B cell (primary cell): ENCODE measurements at regions of chr2 and their contacts with region 1.

Region 1: GRCh38 chr2:230268606-230269243 is 43.2 kb downstream of the SP140 start:
- DNase-seq: no peak
- ATAC-seq: no peak
- H3K4me3 ChIP-seq: no peak overlapping the region
- H3K4me3 Mint-ChIP-seq: peak overlapping the region; percentile 54
- H3K27ac ChIP-seq: peak overlapping the region; percentile 1 to 31
- H3K27ac Mint-ChIP-seq: peak overlapping the region; percentile 84
- H3K4me1 ChIP-seq: peaks cover 32 to 38% of the 10 kb centered on the region in 2 donors
- H3K4me1 Mint-ChIP-seq: peaks cover 64% of the 10 kb centered on the region
- H3K27me3 ChIP-seq: no peaks in the 10 kb centered on the region
- H3K27me3 Mint-ChIP-seq: no peaks in the 10 kb centered on the region
- CTCF ChIP-seq: no peak

Region 2: DNA sequence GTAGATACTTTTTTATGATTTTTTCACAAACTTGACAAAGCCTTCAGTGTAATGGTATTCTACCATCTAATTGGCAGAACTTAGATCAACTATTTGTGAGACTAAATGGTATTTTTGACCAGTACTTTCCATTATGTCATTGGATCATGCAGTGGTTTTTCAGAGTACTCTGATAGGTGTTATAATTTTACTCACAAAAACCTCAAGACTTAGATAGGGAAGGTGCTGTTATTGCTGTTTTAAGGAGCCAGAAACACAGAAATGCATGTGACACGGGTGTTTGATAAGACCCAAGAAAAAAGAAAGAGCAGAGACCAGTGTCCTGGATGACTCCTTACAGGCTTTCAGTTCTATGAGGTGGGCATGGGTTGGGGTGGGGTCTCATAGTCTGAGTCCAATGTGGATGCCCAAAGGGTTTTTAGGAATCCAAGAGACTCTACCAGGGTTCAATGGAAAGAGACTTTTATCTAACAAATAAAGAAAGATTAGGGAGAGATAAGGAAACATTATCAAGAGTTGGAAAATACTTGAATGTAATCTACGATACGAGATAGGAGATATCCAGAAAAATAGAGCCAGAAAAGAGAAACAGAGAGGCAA is 11.9 kb before region 1 on chr2:
- CTCF ChIA-PET with region 1: no interaction called
- POLR2A ChIA-PET with region 1: interaction called, 6 read pairs
- intact Hi-C with region 1: loop called (anchors 1 kb)
- DNase-seq: no peak
- ATAC-seq: no peak
- H3K4me3 ChIP-seq: no peak overlapping the region
- H3K4me3 Mint-ChIP-seq: peak overlapping the region; percentile 68
- H3K27ac ChIP-seq: peak overlapping the region; percentile 43 to 78
- H3K27ac Mint-ChIP-seq: peak overlapping the region; percentile 83
- H3K4me1 ChIP-seq: peaks cover 20 to 26% of the 10 kb centered on the region in 2 donors
- H3K4me1 Mint-ChIP-seq: peaks cover 45% of the 10 kb centered on the region
- H3K27me3 ChIP-seq: no peaks in the 10 kb centered on the region
- H3K27me3 Mint-ChIP-seq: no peaks in the 10 kb centered on the region
- CTCF ChIP-seq: no peak

Region 3: DNA sequence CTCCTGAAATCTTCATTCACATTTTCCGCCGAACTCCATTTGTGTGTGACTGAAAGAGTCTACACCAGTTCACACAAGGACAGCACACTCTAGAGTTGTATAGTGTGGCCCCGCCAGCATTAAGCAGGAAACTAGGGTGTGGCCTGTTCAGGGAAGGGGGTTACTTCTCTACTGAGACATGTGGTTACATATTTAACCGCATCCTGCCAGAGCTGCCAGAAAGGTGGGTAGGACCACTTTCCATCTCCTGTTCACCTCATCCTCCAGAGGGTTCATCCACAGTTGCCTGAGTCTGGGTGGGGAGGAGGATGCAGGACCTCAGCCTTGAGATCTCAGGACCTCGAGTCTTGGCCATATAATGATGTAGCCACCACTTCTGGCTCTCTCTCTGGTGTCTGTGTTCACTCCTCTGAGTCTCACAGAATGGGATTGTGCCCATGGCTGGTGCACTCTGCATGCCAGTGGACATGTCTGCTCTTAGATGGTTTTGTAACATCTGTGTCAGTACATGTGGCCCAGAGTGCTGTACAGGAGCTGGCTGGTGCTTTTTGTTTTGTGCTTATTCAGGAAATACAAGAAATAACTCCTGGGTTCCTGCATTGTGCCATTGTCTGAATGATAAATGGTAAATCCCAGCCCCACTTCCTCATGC is 50.6 kb after region 1 on chr2:
- CTCF ChIA-PET with region 1: no interaction called
- POLR2A ChIA-PET with region 1: no interaction called
- intact Hi-C with region 1: loop called (anchors 5 kb)
- DNase-seq: peak; percentile 78
- ATAC-seq: peak; percentile 84
- H3K4me3 ChIP-seq: peak overlapping the region in 4 of 5 experiments; percentile 6 to 47 (median 21)
- H3K4me3 Mint-ChIP-seq: peak overlapping the region; percentile 69
- H3K27ac ChIP-seq: peak overlapping the region; percentile 79 to 86
- H3K27ac Mint-ChIP-seq: peak overlapping the region; percentile 92
- H3K4me1 ChIP-seq: peaks cover 41 to 63% of the 10 kb centered on the region in 2 donors
- H3K4me1 Mint-ChIP-seq: peaks cover 76% of the 10 kb centered on the region
- H3K27me3 ChIP-seq: no peaks in the 10 kb centered on the region
- H3K27me3 Mint-ChIP-seq: no peaks in the 10 kb centered on the region
- CTCF ChIP-seq: no peak